ENCODE measurements at regions of chr15 and their contacts with region 1.

Region 1: DNA sequence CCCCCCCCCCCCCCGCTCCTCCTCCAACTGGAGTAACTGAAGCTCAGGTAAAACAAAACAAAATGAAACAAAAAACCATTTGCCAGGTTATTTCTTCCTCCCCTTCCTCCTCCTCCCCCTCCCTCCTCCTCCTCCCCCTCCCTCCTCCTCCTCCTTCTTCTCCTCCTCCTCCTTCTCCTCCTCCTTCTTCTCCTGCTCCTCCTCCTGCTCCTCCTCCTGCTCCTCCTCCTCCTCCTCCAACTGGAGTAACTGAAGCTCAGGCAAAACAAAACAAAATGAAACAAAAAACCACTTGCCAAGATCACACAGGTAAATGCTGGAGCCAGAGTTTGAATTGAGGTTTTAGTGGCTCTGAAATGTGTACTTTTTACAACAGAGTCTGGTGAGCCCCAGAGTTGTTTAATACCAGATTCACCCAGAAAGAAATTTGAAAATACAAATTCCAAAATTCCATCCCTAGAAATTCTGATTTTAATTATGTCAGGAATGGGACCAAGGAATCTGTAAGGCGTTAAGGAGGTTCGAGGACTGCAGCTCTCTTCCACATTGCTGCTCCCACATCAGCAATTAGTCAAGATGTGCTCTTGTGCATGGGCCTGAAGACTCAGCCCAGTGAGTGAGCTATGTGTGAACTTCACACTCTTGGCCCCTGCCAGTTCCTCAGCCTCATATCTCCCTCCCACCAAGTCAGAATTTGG is 31.4 kb upstream of the ZNF770 start:
- DNase-seq: peak in 1 of 2 experiments; percentile 47
- H3K4me3 ChIP-seq: peak overlapping the region in 1 of 4 experiments; percentile 34; a peak in 1 of 8 replicates
- H3K27ac ChIP-seq: peak overlapping the region; percentile 80
- H3K4me1 ChIP-seq: peaks cover 5 to 10% (median 8%) of the 10 kb centered on the region in 4 experiments; a peak in 5 of 7 replicates
- H3K27me3 ChIP-seq: no peaks in the 10 kb centered on the region
- CTCF ChIP-seq: no peak
- EP300 ChIP-seq: no peak
- POLR2A ChIP-seq: no peak
- RAD21 ChIP-seq: no peak

Region 2: DNA sequence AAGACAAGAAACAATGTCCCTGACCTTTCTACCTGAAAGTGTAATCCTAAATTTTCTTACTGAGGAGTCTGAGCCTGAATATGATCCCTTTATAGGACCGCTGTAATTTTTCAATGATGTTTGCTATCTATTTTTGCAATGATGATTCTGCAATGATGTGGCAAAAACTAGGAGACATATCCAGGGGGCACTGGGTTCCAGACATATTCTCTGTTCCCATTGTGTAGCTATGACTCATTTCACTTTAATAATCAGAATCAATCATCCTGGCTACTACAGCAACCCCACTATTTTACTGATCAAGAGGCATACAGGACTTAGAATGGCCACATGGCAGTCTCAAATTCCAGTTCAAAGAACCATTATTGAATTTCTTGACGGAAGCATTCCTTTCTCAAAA is 135.9 kb before region 1 on chr15:
- CTCF ChIA-PET with region 1: no interaction called
- POLR2A ChIA-PET with region 1: no interaction called
- DNase-seq: no peak
- H3K4me3 ChIP-seq: no peak overlapping the region
- H3K27ac ChIP-seq: no peak overlapping the region
- H3K4me1 ChIP-seq: no peaks in the 10 kb centered on the region; a peak in 1 of 7 replicates
- H3K27me3 ChIP-seq: no peaks in the 10 kb centered on the region
- CTCF ChIP-seq: no peak
- EP300 ChIP-seq: no peak
- POLR2A ChIP-seq: no peak
- RAD21 ChIP-seq: no peak

Region 3: DNA sequence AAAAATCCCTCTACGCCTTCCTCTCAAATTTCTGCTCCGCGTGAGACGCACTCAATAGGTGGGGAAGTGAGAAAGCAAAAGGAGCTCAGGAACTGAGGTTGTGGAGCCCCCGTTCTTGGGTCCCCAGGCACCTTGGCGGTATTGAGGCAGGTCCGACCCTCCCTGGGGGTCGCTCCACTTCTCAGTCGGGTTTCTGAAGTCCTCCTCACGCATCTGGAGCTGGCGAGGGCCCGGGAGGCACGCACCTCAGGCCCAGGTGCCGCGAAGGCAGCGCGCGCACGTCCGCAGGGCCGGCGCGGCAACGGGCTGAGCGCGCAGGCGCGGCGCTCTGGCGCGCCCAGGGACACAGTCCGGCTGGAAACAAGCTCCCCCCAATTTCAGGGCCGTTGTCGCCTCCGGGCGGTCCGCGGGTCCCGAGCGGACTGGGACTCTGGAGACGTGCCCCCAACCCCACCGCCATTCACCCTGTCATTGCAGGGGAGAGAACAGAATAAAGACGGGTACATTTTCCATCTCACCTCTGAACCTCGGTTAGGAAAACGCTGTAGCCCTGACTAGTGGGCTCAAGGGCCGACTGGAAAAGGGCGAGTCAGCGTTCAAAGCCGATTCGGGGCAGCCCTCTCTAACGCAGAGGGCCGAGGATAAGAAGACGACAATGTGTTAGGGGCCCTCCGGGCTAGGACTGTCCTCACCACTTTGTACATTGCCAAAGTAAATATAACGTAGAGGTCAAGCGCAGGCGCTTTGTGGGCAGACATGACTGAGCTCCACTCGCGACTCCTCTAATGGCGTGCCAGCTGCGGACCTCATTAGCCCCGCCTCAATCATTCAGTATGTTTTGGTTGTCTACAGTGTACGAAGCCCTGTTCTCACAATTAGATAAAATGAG is 31.3 kb before region 1 on chr15 and contains the start of gene ZNF770:
- CTCF ChIA-PET with region 1: interaction called, 17 read pairs
- POLR2A ChIA-PET with region 1: interaction called, 20 read pairs
- DNase-seq: peak; percentile 29 to 93
- H3K4me3 ChIP-seq: peak within 1 kb of the TSS; percentile 97 to 99 (median 98)
- H3K27ac ChIP-seq: peak within 1 kb of the TSS; percentile 89
- H3K4me1 ChIP-seq: peaks cover 3 to 10% (median 3%) of the 10 kb centered on the region in 4 experiments; a peak in 4 of 7 replicates
- H3K27me3 ChIP-seq: no peaks in the 10 kb centered on the region
- CTCF ChIP-seq: no peak
- EP300 ChIP-seq: no peak
- POLR2A ChIP-seq: peak; percentile 64 to 95
- RAD21 ChIP-seq: 0 out of 4 replicates have a peak, but pooled peaks of 1 of the 2 experiments have one; percentile 2
- total RNA-seq, gene ZNF770: 121 and 143 TPM in 2 replicates

Region 4: GRCh38 chr15:34994925-34995324 is 24.6 kb before region 1 on chr15:
- CTCF ChIA-PET with region 1: interaction called, 17 read pairs
- POLR2A ChIA-PET with region 1: interaction called, 20 read pairs
- DNase-seq: no peak
- H3K4me3 ChIP-seq: no peak overlapping the region
- H3K27ac ChIP-seq: peak overlapping the region; percentile 27; the same call in 1 of the 2 replicates
- H3K4me1 ChIP-seq: peaks cover 1 to 15% (median 5%) of the 10 kb centered on the region in 4 experiments; a peak in 5 of 7 replicates
- H3K27me3 ChIP-seq: no peaks in the 10 kb centered on the region
- CTCF ChIP-seq: no peak
- EP300 ChIP-seq: no peak
- POLR2A ChIP-seq: no peak
- RAD21 ChIP-seq: no peak

Region 5: GRCh38 chr15:35000511-35000910 is 19.0 kb before region 1 on chr15:
- CTCF ChIA-PET with region 1: interaction called, 14 read pairs
- POLR2A ChIA-PET with region 1: interaction called, 10 read pairs
- DNase-seq: no peak
- H3K4me3 ChIP-seq: no peak overlapping the region
- H3K27ac ChIP-seq: no peak overlapping the region
- H3K4me1 ChIP-seq: peaks cover 0 to 4% (median 3%) of the 10 kb centered on the region in 4 experiments; a peak in 3 of 7 replicates
- H3K27me3 ChIP-seq: no peaks in the 10 kb centered on the region
- CTCF ChIP-seq: no peak
- EP300 ChIP-seq: no peak
- POLR2A ChIP-seq: no peak
- RAD21 ChIP-seq: no peak

Region 6: DNA sequence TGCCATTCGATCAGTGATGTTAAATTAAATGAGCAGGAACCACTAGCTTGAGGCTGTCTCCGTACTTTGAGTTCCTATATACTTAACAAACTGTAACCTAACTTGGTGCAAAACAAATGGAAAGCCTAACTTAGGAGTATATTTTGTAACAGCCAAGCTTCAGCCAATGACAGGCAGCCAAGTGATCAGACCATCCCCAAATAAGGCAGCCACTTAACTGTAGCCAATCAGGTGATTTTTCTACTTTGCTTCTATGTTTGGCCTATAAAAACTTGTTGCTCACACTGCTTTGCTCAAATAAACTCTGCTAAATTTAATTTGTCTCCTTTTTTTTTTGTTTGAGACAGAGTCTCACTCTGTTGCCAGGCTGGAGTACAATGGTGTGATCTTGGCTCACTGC is 12.1 kb before region 1 on chr15:
- CTCF ChIA-PET with region 1: interaction called, 14 read pairs
- POLR2A ChIA-PET with region 1: interaction called, 4 read pairs
- DNase-seq: no peak
- H3K4me3 ChIP-seq: no peak overlapping the region
- H3K27ac ChIP-seq: no peak overlapping the region
- H3K4me1 ChIP-seq: no peaks in the 10 kb centered on the region
- H3K27me3 ChIP-seq: no peaks in the 10 kb centered on the region
- CTCF ChIP-seq: no peak
- EP300 ChIP-seq: no peak
- POLR2A ChIP-seq: no peak
- RAD21 ChIP-seq: no peak